A673 (cell line): ENCODE measurements at regions of chr10 and their contacts with region 1.

Region 1: DNA sequence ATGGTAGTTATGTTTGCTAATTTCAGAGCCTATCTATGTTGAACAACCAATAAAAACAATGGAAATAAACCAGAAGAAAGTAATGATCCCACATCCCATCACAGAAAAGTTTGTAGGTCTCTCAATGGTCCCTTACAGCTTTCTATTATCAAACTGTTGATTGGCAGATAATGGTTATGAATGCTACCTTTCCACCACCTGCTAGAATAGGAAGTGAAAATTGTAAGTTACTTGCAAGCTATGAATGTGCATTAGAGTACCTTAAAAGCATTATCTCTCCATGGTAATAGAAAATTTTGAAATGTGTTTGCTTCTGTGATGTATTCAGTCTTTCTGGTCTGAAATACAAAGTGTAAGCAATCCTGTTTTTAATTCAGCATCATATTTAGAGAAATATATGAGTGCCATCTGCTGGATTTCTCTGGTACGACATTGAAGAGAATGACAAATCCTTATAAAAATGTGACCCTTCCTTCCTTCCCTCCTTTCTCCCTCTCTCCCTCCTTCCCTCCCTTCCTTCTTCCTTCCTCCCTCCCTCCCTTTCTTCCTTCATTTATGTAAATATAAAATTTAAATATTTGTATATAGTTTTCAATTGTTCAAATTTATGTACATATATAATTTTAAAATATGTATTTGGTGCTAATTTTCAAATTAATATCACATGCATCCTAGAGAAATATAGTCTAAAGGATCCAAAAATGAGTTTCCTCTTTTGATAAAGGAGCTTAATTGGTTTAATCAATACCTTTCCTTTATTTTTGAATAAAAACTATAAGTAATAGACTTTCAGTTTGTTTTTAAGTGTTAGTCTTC is 41.4 kb upstream of the PNLIPRP3 start:
- DNase-seq: peak; percentile 50
- H3K4me3 ChIP-seq: no peak overlapping the region
- H3K27ac ChIP-seq: no peak overlapping the region
- H3K4me1 ChIP-seq: no peaks in the 10 kb centered on the region
- H3K27me3 ChIP-seq: peaks cover 67% of the 10 kb centered on the region
- CTCF ChIP-seq: peak; percentile 63

Region 2: DNA sequence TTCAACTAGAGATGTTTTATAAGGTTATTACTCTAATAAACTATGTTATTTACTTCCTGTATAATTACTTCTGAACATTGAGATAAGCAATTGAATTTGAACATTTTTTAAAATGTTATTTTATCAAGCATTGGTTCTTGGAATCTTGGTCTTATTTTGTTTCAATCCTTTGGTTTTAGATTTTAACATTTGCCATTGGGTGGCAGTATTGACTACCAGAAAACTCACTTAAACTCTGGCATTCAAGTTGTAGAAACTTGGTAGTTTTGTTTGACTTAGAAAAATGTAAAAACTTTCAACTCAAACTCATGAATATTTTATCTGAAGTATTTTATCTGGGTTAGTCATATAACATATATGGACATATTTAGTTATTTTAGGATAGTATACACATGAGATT is 1244.9 kb before region 1 on chr10:
- CTCF ChIA-PET with region 1: no interaction called
- POLR2A ChIA-PET with region 1: no interaction called
- intact Hi-C with region 1: loop called (anchors 10 kb)
- DNase-seq: peak; percentile 33
- H3K4me3 ChIP-seq: no peak overlapping the region
- H3K27ac ChIP-seq: no peak overlapping the region
- H3K4me1 ChIP-seq: no peaks in the 10 kb centered on the region
- H3K27me3 ChIP-seq: peaks cover 19% of the 10 kb centered on the region
- CTCF ChIP-seq: peak; percentile 60

Region 3: GRCh38 chr10:115355162-115355760 is 1030.9 kb before region 1 on chr10:
- CTCF ChIA-PET with region 1: no interaction called
- POLR2A ChIA-PET with region 1: no interaction called
- intact Hi-C with region 1: loop called (anchors 2 kb)
- DNase-seq: peak; percentile 70
- H3K4me3 ChIP-seq: no peak overlapping the region
- H3K27ac ChIP-seq: no peak overlapping the region
- H3K4me1 ChIP-seq: no peaks in the 10 kb centered on the region
- H3K27me3 ChIP-seq: peaks cover 6% of the 10 kb centered on the region
- CTCF ChIP-seq: peak; percentile 74

Region 4: DNA sequence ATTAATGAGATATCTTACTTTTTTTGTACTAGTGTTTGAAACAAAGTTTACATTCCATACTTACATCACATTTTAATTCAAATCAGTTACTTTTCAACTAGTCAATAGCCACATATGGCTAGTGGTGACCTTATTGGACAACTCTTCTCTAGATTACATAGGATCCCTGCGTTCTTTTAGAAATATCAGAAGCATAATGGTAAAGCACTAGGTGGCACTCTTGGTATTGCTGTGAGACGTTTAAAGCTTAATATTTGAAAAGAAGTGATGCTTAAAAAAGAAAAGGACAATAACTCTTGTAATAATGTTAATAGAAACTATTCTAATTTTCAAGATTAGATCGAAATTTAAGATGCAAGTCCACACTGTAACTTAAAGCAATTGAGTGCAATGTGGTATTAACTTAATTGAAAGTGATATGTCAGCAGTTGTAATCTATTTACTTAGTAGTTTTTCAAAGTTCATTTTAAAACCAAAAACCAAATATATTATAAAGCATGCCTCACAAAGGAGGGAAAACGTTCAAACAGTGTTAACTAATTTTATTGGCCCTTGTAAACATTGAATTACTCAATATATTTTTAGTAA is 953.9 kb before region 1 on chr10:
- CTCF ChIA-PET with region 1: no interaction called
- POLR2A ChIA-PET with region 1: no interaction called
- intact Hi-C with region 1: loop called (anchors 2 kb)
- DNase-seq: peak; percentile 38
- H3K4me3 ChIP-seq: no peak overlapping the region
- H3K27ac ChIP-seq: no peak overlapping the region
- H3K4me1 ChIP-seq: no peaks in the 10 kb centered on the region
- H3K27me3 ChIP-seq: no peaks in the 10 kb centered on the region
- CTCF ChIP-seq: peak; percentile 56

Region 5: DNA sequence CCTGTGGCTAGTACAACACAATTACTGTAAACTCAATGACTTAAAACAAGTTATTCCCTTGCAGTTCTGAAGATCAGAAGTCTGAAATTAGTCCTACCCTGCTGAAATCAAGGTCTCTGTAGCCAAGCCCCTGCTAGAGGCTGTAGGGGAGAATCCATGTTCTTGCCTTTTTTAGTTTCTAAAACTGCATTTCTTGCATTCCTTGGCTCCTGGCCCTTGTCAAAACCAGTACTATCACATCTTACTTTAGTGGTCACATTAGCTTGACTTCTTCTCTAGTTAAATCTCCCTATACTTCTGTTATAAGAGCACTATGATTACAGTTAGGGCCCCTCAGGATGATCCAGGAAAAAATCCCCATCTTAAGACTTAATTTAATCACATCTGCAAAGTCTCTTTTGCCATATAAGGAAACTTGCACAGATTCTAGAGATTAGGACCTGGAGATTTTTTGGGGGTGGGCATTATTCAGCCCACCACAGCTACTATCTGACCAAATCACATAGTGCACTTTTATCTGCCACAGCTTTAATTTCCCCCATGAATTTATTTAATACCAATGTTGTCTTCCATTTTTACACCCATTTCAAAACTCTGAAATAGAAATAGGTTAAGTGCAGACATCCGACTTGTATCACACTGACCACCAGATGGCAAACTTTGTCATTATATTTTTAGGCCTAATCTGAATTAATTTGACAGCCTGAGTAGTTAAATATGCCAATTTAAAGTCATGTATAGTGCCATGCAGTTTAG is 680.0 kb before region 1 on chr10:
- CTCF ChIA-PET with region 1: no interaction called
- POLR2A ChIA-PET with region 1: no interaction called
- intact Hi-C with region 1: loop called (anchors 2 kb)
- DNase-seq: peak; percentile 48
- H3K4me3 ChIP-seq: no peak overlapping the region
- H3K27ac ChIP-seq: no peak overlapping the region
- H3K4me1 ChIP-seq: no peaks in the 10 kb centered on the region
- H3K27me3 ChIP-seq: peaks cover 22% of the 10 kb centered on the region
- CTCF ChIP-seq: peak; percentile 70

Region 6: DNA sequence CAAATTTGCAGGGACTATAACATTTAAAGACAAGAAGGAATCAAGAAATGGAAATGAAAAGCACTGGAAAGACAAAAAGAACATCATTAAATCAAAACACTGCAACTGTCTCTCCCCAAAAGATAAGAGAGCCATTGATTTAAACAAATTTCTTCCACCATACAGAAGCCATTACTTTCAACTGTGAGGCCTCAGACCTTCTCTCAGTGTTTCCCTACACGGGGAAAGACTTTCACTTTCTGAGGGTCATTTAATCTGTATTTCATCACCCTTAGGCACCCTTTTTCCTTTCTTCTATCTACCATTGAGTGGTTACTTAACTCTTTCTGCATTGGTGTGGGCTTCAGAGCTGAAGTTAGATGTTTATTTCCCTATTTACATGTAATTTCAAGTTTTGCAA is 14.5 kb before region 1 on chr10:
- CTCF ChIA-PET with region 1: no interaction called
- POLR2A ChIA-PET with region 1: no interaction called
- intact Hi-C with region 1: no loop called
- DNase-seq: no peak
- H3K4me3 ChIP-seq: no peak overlapping the region
- H3K27ac ChIP-seq: no peak overlapping the region
- H3K4me1 ChIP-seq: no peaks in the 10 kb centered on the region
- H3K27me3 ChIP-seq: peaks cover 35% of the 10 kb centered on the region
- CTCF ChIP-seq: no peak

Region 7: GRCh38 chr10:116429288-116429977 is 43.2 kb after region 1 on chr10:
- CTCF ChIA-PET with region 1: no interaction called
- POLR2A ChIA-PET with region 1: no interaction called
- intact Hi-C with region 1: no loop called
- DNase-seq: no peak
- H3K4me3 ChIP-seq: no peak overlapping the region
- H3K27ac ChIP-seq: no peak overlapping the region
- H3K4me1 ChIP-seq: no peaks in the 10 kb centered on the region
- H3K27me3 ChIP-seq: peaks cover 15% of the 10 kb centered on the region
- CTCF ChIP-seq: no peak